Activated CD4-positive, alpha-beta T cell treated with anti-CD3 and anti-CD28 coated beads, Interleukin-2, amount 10 ng/mL, durations not matched to agents 7 days and 5 days (primary cell): ENCODE measurements at regions of chr7 and their contacts with region 1.

Region 1: GRCh38 chr7:106176414-106177299 is 64.5 kb upstream of the SYPL1 start:
- DNase-seq: peak; percentile 70
- H3K4me3 Mint-ChIP-seq: no peak overlapping the region
- H3K27ac Mint-ChIP-seq: no peak overlapping the region
- H3K4me1 Mint-ChIP-seq: peaks cover 3% of the 10 kb centered on the region
- H3K27me3 Mint-ChIP-seq: peaks cover 14% of the 10 kb centered on the region

Region 2: DNA sequence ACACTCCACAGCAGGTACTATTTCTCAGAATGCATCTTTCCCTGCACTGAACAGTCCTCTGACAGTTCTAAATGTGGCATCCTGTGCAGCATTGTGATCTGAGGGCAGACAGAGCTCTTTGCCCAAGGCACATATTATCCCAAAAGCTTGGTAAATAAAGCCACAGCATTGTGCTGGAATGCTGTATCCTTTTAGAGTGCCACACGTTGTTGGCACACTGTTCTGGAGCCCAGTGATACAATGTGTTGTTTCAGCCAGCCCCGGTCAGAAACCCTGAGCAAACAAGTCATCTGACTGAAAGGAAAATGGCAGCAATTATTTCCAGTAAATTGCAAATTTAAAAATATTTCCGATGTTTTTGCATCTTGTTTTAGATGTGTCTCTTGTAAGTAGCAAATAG is 62.7 kb after region 1 on chr7:
- CTCF ChIA-PET with region 1: no interaction called
- POLR2A ChIA-PET with region 1: no interaction called
- DNase-seq: no peak
- H3K4me3 Mint-ChIP-seq: no peak overlapping the region
- H3K27ac Mint-ChIP-seq: no peak overlapping the region
- H3K4me1 Mint-ChIP-seq: no peaks in the 10 kb centered on the region
- H3K27me3 Mint-ChIP-seq: peaks cover 5% of the 10 kb centered on the region

Region 3: DNA sequence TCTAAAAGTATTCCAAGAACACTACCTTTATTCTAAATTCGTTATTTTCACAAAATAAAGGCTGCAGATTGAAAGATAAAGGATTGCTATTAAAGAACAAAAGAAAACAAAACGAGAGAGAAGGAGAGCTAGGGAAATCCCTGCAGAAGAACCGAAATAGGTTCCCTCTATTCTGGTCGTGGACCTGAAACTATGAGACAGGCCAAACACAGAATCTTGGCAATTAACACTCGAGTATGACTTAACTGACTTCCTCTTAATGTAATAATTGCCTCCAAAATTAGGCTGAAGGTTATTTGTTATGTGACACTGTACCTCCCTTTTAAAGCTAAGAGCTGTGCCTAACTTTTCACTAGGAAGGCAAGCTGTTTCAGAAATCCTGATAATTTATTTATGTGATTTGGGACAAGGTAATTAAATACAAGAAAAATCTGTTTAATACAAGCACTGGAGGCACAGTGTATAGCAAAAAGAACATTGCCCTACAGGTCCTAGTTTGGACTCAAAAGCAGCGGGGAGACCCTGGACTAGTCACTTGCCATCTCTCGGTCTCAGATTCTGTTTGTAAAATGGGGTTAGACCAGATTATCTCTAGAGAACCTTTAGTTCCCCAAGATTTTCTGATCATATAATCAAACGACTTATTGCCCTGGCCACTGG is 96.5 kb after region 1 on chr7:
- CTCF ChIA-PET with region 1: no interaction called
- POLR2A ChIA-PET with region 1: no interaction called
- DNase-seq: no peak
- H3K4me3 Mint-ChIP-seq: no peak overlapping the region
- H3K27ac Mint-ChIP-seq: no peak overlapping the region
- H3K4me1 Mint-ChIP-seq: peaks cover 17% of the 10 kb centered on the region
- H3K27me3 Mint-ChIP-seq: no peaks in the 10 kb centered on the region

Region 4: DNA sequence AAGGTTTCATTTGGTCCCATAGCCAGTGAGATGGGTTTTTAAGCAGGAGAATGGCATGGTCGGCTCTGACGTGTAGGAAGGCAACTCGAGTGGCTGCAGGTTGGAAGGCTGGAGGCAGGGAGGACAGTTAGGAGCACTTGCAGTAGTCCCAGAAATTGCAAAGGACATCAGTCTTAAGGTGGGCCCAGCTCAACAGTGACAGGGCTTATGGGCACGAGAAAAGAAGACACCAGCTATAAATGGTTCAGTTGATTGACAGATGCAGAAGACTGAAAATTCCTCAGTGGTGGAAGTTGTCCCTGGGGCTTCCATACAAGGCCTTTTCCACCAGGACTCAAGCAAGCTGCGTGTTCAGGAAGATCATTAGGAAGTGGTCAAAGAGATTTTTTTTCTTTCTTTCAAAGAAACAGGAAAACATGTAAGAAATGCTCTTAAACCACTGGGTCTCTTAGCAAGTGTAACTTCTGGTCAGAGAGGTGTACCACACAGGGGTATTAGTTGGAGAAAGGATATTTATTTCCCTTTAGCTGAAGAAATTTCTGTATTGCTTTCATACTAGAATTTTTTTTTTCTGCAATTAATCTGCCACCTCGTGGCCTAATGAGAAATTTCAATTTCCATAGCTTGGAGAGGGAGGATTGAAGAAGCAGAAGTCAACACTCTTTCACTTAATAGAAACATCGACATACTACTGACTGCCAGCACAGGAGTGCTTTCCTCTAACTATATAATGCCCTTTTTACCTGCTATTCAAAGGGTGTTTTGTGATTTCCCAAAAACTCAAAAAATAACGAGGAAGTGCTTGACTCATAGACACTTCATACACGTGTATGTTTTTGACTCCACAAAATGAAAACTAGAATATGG is 285.6 kb after region 1 on chr7:
- CTCF ChIA-PET with region 1: interaction called, 32 read pairs
- POLR2A ChIA-PET with region 1: no interaction called
- DNase-seq: peak; percentile 15
- H3K4me3 Mint-ChIP-seq: no peak overlapping the region
- H3K27ac Mint-ChIP-seq: no peak overlapping the region
- H3K4me1 Mint-ChIP-seq: peaks cover 5% of the 10 kb centered on the region
- H3K27me3 Mint-ChIP-seq: no peaks in the 10 kb centered on the region